ENCODE measurements at regions of chr20 and their contacts with region 1.

Region 1: GRCh38 chr20:7859356-7859802 is 80.9 kb downstream of the HAO1 start:
- DNase-seq: no peak
- ATAC-seq: peak; percentile 47; the same call in 1 of the 2 replicates
- H3K4me3 ChIP-seq: no peak overlapping the region
- H3K27ac ChIP-seq: no peak overlapping the region
- H3K4me1 ChIP-seq: peaks cover 0 to 15% of the 10 kb centered on the region in 2 experiments; a peak in 2 of 4 replicates
- H3K27me3 ChIP-seq: no peaks in the 10 kb centered on the region
- CTCF ChIP-seq: peak; percentile 32 to 69 (median 52); a peak in 5 of 6 replicates
- POLR2A ChIP-seq: no peak
- RAD21 ChIP-seq: peak; percentile 66

Region 2: DNA sequence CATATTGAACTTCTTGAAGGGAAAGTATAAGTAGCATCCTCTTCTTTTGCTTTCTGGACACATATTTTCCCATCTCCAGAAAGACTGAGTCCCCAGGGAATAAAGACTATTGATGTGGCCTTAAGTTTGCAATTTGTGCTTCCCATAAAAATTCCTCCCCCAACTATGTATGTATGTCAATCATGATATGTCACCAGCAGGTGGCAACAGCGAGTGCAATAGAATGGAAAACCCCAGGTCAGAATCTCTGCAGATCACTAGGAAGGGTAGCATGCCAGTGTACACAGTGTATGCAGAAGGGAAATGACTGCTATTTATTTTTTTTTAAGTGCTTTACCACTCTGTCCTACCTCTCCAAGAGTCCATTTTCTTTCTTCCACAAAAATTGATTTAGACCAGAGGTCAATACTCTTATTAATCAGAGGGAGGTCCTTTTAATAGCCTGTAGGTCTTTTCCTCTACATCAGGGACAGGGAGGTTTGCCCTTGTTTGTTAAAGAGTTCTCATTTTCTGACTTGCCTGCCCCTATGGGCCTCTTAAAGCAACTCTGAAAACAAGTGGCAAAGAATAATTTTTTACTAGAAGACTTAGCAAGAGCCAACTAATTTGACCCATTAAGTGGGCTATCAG is 1030.5 kb before region 1 on chr20:
- CTCF ChIA-PET with region 1: no interaction called
- POLR2A ChIA-PET with region 1: no interaction called
- RAD21 ChIA-PET with region 1: no interaction called
- intact Hi-C with region 1: loop called (anchors 1 kb)
- DNase-seq: peak; percentile 21
- ATAC-seq: peak; percentile 70
- H3K4me3 ChIP-seq: no peak overlapping the region
- H3K27ac ChIP-seq: no peak overlapping the region
- H3K4me1 ChIP-seq: no peaks in the 10 kb centered on the region
- H3K27me3 ChIP-seq: no peaks in the 10 kb centered on the region
- CTCF ChIP-seq: peak in 2 of 3 experiments; percentile 52 to 54; a peak in 4 of 6 replicates
- POLR2A ChIP-seq: no peak
- RAD21 ChIP-seq: peak; percentile 18; the same call in 1 of the 2 replicates

Region 3: GRCh38 chr20:7703551-7703961 is 155.8 kb before region 1 on chr20:
- CTCF ChIA-PET with region 1: no interaction called
- POLR2A ChIA-PET with region 1: no interaction called
- RAD21 ChIA-PET with region 1: no interaction called
- intact Hi-C with region 1: no loop called
- DNase-seq: no peak
- ATAC-seq: no peak
- H3K4me3 ChIP-seq: no peak overlapping the region
- H3K27ac ChIP-seq: no peak overlapping the region
- H3K4me1 ChIP-seq: no peaks in the 10 kb centered on the region
- H3K27me3 ChIP-seq: no peaks in the 10 kb centered on the region
- CTCF ChIP-seq: no peak
- POLR2A ChIP-seq: no peak
- RAD21 ChIP-seq: no peak

Region 4: GRCh38 chr20:7841971-7842310 is 17.4 kb before region 1 on chr20:
- CTCF ChIA-PET with region 1: no interaction called
- POLR2A ChIA-PET with region 1: no interaction called
- RAD21 ChIA-PET with region 1: no interaction called
- intact Hi-C with region 1: no loop called
- DNase-seq: no peak
- ATAC-seq: peak; percentile 58
- H3K4me3 ChIP-seq: no peak overlapping the region
- H3K27ac ChIP-seq: no peak overlapping the region
- H3K4me1 ChIP-seq: peaks cover 0 to 20% of the 10 kb centered on the region in 2 experiments; a peak in 1 of 4 replicates
- H3K27me3 ChIP-seq: no peaks in the 10 kb centered on the region
- CTCF ChIP-seq: no peak
- POLR2A ChIP-seq: no peak
- RAD21 ChIP-seq: no peak

Region 5: DNA sequence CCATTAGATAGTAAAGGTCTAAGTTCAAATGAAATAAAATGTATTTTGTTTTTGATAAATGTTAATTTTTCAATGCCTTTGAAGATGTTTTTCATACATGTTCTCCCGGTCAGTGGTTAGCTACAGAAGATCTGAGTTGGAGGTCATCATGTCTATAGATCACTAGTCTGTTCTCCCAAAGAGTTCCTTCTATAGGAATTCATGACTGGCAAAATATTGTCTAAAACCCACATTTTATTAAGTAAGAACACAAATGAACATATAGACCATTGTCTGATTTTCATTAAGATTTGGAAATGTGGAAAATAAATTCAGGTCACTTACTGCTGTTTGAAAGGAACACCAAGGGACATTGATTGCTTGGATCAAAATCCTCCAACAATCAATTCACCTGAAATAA is 57.3 kb after region 1 on chr20:
- CTCF ChIA-PET with region 1: no interaction called
- POLR2A ChIA-PET with region 1: no interaction called
- RAD21 ChIA-PET with region 1: no interaction called
- intact Hi-C with region 1: no loop called
- DNase-seq: no peak
- ATAC-seq: no peak
- H3K4me3 ChIP-seq: no peak overlapping the region
- H3K27ac ChIP-seq: no peak overlapping the region
- H3K4me1 ChIP-seq: no peaks in the 10 kb centered on the region
- H3K27me3 ChIP-seq: no peaks in the 10 kb centered on the region
- CTCF ChIP-seq: no peak
- POLR2A ChIP-seq: no peak
- RAD21 ChIP-seq: no peak